CD8-positive, alpha-beta T cell (primary cell): ENCODE measurements at regions of chr10 and their contacts with region 1.

Region 1: DNA sequence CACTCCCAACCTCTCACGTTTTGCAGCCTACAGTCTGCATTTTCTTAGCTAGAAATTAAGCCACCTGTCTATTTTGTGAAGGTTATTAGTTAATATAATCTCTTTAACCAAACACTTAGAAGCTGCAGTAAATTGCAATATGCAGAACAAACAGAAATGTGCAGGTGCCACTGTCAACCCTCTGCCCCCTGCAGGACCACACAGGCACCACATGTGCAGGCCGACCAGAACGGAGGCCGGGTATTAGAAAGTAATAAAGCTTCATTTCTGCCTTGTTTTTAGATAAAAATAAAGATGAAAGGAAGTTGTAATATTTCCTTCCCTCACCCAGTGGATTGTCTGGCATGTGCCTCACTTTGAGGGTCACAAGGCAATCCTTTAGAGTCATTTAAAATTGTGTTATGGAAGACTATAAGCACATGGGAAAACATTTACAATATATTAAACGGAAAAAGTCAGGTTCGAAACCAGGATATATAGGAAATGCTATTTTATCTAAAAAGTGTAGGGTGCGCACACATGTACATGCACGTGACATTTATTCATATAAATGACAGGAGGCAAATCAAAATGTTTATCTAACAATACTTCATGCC is 158.2 kb downstream of the ARHGAP12 start:
- DNase-seq: peak; percentile 43 to 74 (median 62)
- ATAC-seq: peak; percentile 97
- H3K4me3 ChIP-seq: no peak overlapping the region
- H3K4me3 Mint-ChIP-seq: no peak overlapping the region
- H3K27ac ChIP-seq: no peak overlapping the region
- H3K27ac Mint-ChIP-seq: no peak overlapping the region
- H3K4me1 ChIP-seq: no peaks in the 10 kb centered on the region
- H3K4me1 Mint-ChIP-seq: no peaks in the 10 kb centered on the region
- H3K27me3 ChIP-seq: no peaks in the 10 kb centered on the region
- H3K27me3 Mint-ChIP-seq: no peaks in the 10 kb centered on the region
- CTCF ChIP-seq: peak; percentile 89

Region 2: DNA sequence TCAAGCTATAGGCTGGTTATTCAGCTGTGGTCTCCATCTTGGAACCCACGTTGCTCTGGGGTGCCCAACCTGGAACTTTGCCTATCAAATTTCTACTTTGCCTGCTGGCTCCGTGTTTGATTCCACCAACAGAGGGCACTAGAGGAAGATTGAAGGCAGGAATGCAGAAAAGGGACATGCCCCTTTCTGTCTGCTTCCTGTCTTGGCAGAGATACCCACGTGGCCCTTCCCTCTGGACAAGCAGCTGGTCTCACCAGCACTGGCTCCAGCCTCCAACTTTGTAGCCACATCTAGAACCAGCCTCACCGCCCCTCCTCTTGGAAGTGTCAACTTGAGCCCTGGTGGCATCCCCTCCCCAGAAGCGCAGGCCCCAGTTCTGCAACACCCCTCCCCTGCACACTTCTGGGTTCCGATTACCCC is 686.6 kb before region 1 on chr10:
- CTCF ChIA-PET with region 1: interaction called, 12 read pairs
- POLR2A ChIA-PET with region 1: no interaction called
- intact Hi-C with region 1: loop called (anchors 2 to 10 kb)
- DNase-seq: peak; percentile 19 to 73 (median 50)
- ATAC-seq: peak; percentile 75
- H3K4me3 ChIP-seq: no peak overlapping the region
- H3K4me3 Mint-ChIP-seq: no peak overlapping the region
- H3K27ac ChIP-seq: no peak overlapping the region
- H3K27ac Mint-ChIP-seq: no peak overlapping the region
- H3K4me1 ChIP-seq: no peaks in the 10 kb centered on the region
- H3K4me1 Mint-ChIP-seq: peaks cover 4% of the 10 kb centered on the region
- H3K27me3 ChIP-seq: no peaks in the 10 kb centered on the region
- H3K27me3 Mint-ChIP-seq: no peaks in the 10 kb centered on the region
- CTCF ChIP-seq: no peak

Region 3: DNA sequence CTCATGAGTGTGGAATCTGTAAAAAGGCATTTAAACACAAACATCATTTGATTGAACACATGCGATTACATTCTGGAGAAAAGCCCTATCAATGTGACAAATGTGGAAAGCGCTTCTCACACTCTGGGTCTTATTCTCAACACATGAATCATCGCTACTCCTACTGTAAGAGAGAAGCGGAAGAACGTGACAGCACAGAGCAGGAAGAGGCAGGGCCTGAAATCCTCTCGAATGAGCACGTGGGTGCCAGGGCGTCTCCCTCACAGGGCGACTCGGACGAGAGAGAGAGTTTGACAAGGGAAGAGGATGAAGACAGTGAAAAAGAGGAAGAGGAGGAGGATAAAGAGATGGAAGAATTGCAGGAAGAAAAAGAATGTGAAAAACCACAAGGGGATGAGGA is 243.7 kb before region 1 on chr10:
- CTCF ChIA-PET with region 1: no interaction called
- POLR2A ChIA-PET with region 1: no interaction called
- intact Hi-C with region 1: loop called (anchors 10 kb)
- DNase-seq: no peak
- ATAC-seq: no peak
- H3K4me3 ChIP-seq: no peak overlapping the region
- H3K4me3 Mint-ChIP-seq: no peak overlapping the region
- H3K27ac ChIP-seq: no peak overlapping the region
- H3K27ac Mint-ChIP-seq: peak overlapping the region; percentile 15
- H3K4me1 ChIP-seq: no peaks in the 10 kb centered on the region
- H3K4me1 Mint-ChIP-seq: no peaks in the 10 kb centered on the region
- H3K27me3 ChIP-seq: no peaks in the 10 kb centered on the region
- H3K27me3 Mint-ChIP-seq: no peaks in the 10 kb centered on the region
- CTCF ChIP-seq: no peak

Region 4: DNA sequence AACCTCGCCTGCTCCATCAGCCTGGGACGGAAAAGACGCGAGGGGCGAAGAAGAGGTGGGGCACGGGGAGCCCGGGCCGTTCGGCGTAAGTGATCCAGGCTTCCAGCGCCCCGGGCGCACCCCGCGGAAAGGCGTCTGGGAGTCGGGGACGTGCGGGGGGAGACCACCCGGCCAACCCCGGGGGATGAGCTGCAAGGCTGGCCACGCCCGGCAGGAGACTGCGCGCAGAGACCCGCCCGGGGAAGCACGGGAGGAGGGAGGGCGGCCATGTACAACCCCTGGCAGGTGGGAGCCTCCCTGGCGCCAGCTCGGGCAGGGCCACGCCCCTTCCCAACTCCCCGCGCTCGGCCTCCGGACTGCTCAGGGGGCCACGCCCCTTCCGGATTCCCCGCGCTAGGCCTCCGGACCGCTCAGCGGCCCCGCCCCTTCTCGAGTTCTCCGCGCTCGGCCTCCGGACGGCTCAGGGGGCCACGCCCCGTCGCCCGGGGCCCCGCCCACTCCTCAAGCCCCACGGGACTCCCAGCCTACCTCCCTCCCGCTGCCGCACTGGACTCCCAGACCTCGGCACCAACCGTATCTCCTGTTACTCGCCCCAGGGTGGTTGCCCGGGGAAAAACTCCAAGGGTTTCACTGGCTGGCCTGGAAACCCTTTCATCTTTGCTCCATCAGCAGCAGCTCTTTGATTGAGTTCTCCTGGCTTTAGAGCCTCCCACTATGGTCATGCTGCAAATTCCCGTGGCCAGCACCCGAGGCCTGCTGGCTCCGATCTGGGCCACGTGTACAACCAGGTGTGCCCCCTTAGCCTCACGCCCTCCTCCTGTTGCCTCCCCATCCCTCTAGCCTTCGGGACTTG is 166.9 kb before region 1 on chr10:
- CTCF ChIA-PET with region 1: interaction called, 3 read pairs
- POLR2A ChIA-PET with region 1: no interaction called
- intact Hi-C with region 1: loop called in 1 of 2 experiments (anchors 10 kb)
- DNase-seq: peak; percentile 12 to 80 (median 60)
- ATAC-seq: peak; percentile 80
- H3K4me3 ChIP-seq: peak overlapping the region; percentile 50 to 55
- H3K4me3 Mint-ChIP-seq: peak overlapping the region; percentile 88
- H3K27ac ChIP-seq: no peak overlapping the region
- H3K27ac Mint-ChIP-seq: no peak overlapping the region
- H3K4me1 ChIP-seq: peaks cover 8% of the 10 kb centered on the region
- H3K4me1 Mint-ChIP-seq: peaks cover 10% of the 10 kb centered on the region
- H3K27me3 ChIP-seq: no peaks in the 10 kb centered on the region
- H3K27me3 Mint-ChIP-seq: peaks cover 2% of the 10 kb centered on the region
- CTCF ChIP-seq: no peak

Region 5: DNA sequence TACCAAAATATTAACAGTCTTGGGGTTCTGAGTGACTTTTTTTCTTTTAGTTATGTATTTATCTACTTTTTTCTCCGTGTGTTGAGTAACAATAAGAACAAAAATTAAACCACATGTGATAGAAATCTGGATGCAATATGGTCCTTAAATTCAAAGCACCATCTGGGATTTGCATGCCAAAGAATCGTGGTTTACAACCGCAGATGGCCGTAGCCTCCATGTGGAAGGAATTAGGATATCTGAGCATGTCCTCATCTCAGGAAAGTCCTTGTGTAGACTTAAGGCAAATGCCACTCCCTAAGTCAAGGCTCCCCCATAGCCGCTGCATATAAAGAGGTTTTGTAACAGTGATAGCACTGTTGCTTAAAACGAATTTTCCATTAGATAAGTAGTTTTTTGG is 147.4 kb before region 1 on chr10:
- CTCF ChIA-PET with region 1: no interaction called
- POLR2A ChIA-PET with region 1: no interaction called
- intact Hi-C with region 1: no loop called
- DNase-seq: no peak
- ATAC-seq: no peak
- H3K4me3 ChIP-seq: no peak overlapping the region
- H3K4me3 Mint-ChIP-seq: no peak overlapping the region
- H3K27ac ChIP-seq: no peak overlapping the region
- H3K27ac Mint-ChIP-seq: no peak overlapping the region
- H3K4me1 ChIP-seq: no peaks in the 10 kb centered on the region
- H3K4me1 Mint-ChIP-seq: no peaks in the 10 kb centered on the region
- H3K27me3 ChIP-seq: no peaks in the 10 kb centered on the region
- H3K27me3 Mint-ChIP-seq: peaks cover 2% of the 10 kb centered on the region
- CTCF ChIP-seq: no peak

Region 6: DNA sequence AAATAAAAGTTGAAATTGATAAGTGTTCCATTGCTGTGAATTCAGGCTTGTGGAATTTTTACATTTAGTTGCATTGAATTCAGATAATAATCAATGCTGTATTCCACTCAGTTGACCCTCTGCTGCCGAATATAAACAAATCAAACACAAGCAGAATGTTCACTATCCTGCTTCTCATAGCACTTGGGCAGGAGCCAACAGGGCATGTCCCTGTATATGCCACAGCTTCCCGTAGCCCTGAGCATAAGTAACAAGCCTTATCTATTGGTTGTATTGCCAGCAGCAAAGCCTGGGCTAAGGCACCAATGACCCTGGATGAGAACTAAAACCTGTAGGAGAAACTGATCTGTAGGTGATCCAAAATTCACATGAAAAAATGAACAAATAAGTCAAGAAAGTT is 12.3 kb after region 1 on chr10:
- CTCF ChIA-PET with region 1: interaction called, 34 read pairs
- POLR2A ChIA-PET with region 1: no interaction called
- intact Hi-C with region 1: no loop called
- DNase-seq: no peak
- ATAC-seq: no peak
- H3K4me3 ChIP-seq: no peak overlapping the region
- H3K4me3 Mint-ChIP-seq: no peak overlapping the region
- H3K27ac ChIP-seq: no peak overlapping the region
- H3K27ac Mint-ChIP-seq: no peak overlapping the region
- H3K4me1 ChIP-seq: no peaks in the 10 kb centered on the region
- H3K4me1 Mint-ChIP-seq: no peaks in the 10 kb centered on the region
- H3K27me3 ChIP-seq: no peaks in the 10 kb centered on the region
- H3K27me3 Mint-ChIP-seq: peaks cover 2% of the 10 kb centered on the region
- CTCF ChIP-seq: no peak